ENCODE measurements at regions of chr17 and their contacts with region 1.

Region 1: GRCh38 chr17:45894022-45894784 is at the start of gene MAPT:
- DNase-seq: peak; percentile 91 to 96 (median 93)
- ATAC-seq: peak; percentile 83 to 97 (median 96)
- H3K4me3 ChIP-seq: peak within 1 kb of the TSS; percentile 54 to 95 (median 82)
- H3K27ac ChIP-seq: peak within 1 kb of the TSS in 11 of 12 donors; percentile 55 to 88 (median 68)
- H3K4me1 ChIP-seq: peaks cover 0 to 37% (median 17%) of the 10 kb centered on the region in 12 donors
- H3K27me3 ChIP-seq: peaks cover 0 to 55% (median 21%) of the 10 kb centered on the region in 9 donors
- CTCF ChIP-seq: peak; percentile 77 to 100 (median 98)
- POLR2A ChIP-seq: peak in 1 of 2 donors; percentile 40
- total RNA-seq, gene MAPT: 17.9 to 70.4 (median 38.2) TPM

Region 2: GRCh38 chr17:45355105-45355504 is 539.1 kb before region 1 on chr17:
- intact Hi-C with region 1: no loop called
- DNase-seq: no peak
- ATAC-seq: no peak
- H3K4me3 ChIP-seq: no peak overlapping the region
- H3K27ac ChIP-seq: no peak overlapping the region
- H3K4me1 ChIP-seq: no peaks in the 10 kb centered on the region
- H3K27me3 ChIP-seq: no peaks in the 10 kb centered on the region
- CTCF ChIP-seq: no peak
- POLR2A ChIP-seq: no peak

Region 3: DNA sequence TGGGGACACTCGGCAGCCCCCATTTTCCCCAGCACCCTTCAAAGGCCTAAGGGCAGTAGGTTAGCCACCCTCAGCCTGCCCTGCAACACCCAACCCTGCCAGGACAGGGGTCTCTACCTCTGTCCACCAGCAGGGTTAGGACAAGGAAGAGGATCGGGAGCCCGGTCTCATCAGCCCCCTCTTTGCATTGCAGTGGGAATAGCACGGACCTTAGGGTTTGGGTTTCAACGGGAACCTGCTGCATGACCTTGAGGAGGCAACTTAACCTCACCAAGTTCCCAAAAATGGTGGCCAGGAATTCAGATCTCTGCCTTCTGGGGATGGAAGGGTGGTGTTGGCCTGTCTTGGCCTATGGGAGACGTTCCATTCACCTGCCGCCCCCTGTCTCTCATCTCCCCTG is 69.7 kb before region 1 on chr17:
- intact Hi-C with region 1: no loop called
- DNase-seq: no peak
- ATAC-seq: no peak
- H3K4me3 ChIP-seq: no peak overlapping the region
- H3K27ac ChIP-seq: no peak overlapping the region
- H3K4me1 ChIP-seq: no peaks in the 10 kb centered on the region
- H3K27me3 ChIP-seq: peaks cover 0 to 20% (median 0%) of the 10 kb centered on the region in 9 donors
- CTCF ChIP-seq: no peak
- POLR2A ChIP-seq: no peak

Region 4: GRCh38 chr17:45834471-45835396 is 59.5 kb before region 1 on chr17:
- intact Hi-C with region 1: loop called in 1 of 10 experiments (anchors 10 kb)
- DNase-seq: peak in 1 of 5 donors; percentile 48
- ATAC-seq: no peak
- H3K4me3 ChIP-seq: no peak overlapping the region
- H3K27ac ChIP-seq: no peak overlapping the region
- H3K4me1 ChIP-seq: no peaks in the 10 kb centered on the region
- H3K27me3 ChIP-seq: peaks cover 0 to 34% (median 0%) of the 10 kb centered on the region in 9 donors
- CTCF ChIP-seq: no peak
- POLR2A ChIP-seq: no peak

Region 5: DNA sequence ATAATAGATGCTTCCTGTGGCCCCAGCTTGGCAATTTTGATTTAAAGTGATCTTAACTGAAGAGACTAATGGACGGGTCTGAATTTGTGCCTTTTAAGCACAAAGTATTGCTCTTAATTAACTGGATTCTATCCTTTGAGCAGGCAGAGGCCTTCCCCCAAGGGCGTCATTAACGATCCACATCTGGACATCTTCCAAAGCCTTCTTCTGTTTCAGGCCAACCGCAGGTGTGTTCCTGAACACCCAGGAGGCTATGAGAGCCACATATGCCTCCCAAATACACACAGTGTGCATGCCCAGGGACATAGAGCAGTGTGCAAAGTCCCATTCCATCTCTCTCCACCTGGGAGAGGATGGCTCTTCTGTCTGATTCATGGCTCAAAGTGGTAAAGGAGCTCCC is 42.4 kb after region 1 on chr17:
- intact Hi-C with region 1: loop called in 3 of 10 experiments (anchors 5 to 10 kb)
- DNase-seq: no peak
- ATAC-seq: no peak
- H3K4me3 ChIP-seq: no peak overlapping the region
- H3K27ac ChIP-seq: no peak overlapping the region
- H3K4me1 ChIP-seq: peaks cover 0 to 13% (median 6%) of the 10 kb centered on the region in 12 donors
- H3K27me3 ChIP-seq: no peaks in the 10 kb centered on the region
- CTCF ChIP-seq: no peak
- POLR2A ChIP-seq: no peak

Region 6: DNA sequence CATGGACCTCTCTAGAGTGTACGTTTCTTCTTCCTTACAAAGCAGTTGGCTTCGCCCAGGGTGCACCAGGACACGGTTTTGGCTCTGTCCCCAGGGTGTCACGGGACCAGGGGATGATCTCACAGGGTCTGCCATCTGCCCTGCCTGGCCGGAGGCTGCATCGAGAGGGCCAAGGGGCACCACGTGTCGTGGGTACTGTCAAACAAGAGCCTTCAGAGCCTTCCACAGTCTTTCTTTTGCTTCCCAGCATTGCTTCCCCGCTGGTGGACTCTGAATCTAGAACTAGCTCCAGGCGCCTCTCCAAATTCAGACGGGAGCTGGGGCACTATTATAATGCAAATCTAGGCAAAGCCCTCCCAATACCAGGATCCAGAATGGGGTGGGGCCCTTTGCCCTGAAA is 48.1 kb after region 1 on chr17:
- intact Hi-C with region 1: loop called in 5 of 10 experiments (anchors 2 to 10 kb)
- DNase-seq: peak; percentile 83 to 93 (median 85)
- ATAC-seq: peak; percentile 95 to 99 (median 96)
- H3K4me3 ChIP-seq: no peak overlapping the region
- H3K27ac ChIP-seq: peak overlapping the region in 11 of 12 donors; percentile 32 to 79 (median 69)
- H3K4me1 ChIP-seq: peaks cover 0 to 27% (median 15%) of the 10 kb centered on the region in 12 donors
- H3K27me3 ChIP-seq: no peaks in the 10 kb centered on the region
- CTCF ChIP-seq: no peak
- POLR2A ChIP-seq: no peak

Region 7: DNA sequence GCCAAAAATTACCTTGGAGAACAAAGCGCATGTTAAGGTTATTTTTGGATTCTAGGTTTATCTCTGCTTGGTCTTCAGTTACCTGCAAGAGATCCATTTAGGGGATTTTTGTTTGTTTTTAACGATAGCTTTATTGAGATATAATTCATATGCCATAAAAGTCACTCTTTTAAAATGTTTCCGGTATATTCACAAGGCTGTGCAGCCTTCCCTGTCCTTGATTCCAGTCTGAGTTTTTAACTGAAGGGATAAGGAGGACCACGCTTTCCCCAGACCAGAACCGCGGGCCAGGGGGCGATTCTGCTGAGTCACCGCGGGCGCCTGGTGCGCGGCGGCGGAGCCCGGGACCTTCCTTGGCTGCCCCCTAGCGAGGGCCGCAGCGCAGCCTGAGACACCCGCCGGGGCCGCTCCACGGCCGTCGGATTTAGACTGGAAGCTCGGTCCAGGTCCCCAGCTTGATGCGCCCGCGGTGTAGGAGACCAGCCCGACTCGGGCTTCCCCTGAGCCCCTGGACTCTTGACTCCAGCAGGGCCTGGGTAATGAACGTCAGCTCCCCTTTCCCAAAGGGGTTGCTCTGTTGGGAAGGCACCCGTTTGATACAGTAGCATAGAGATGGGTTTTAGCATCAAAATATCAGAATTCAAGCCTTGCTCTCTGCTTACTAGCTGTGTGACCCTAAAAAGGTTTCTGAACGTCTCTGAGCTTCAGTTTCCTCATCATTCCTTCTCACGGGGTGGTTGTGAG is 54.9 kb after region 1 on chr17:
- intact Hi-C with region 1: loop called in 5 of 10 experiments (anchors 1 to 10 kb)
- DNase-seq: peak; percentile 67 to 87 (median 74)
- ATAC-seq: peak; percentile 64 to 92 (median 88)
- H3K4me3 ChIP-seq: peak overlapping the region in 10 of 12 donors; percentile 12 to 42 (median 30)
- H3K27ac ChIP-seq: peak overlapping the region in 7 of 12 donors; percentile 7 to 52 (median 43)
- H3K4me1 ChIP-seq: peaks cover 0 to 19% (median 7%) of the 10 kb centered on the region in 12 donors
- H3K27me3 ChIP-seq: peaks cover 0 to 14% (median 0%) of the 10 kb centered on the region in 9 donors
- CTCF ChIP-seq: peak; percentile 63 to 87 (median 81)
- POLR2A ChIP-seq: no peak

Measured in heart left ventricle (tissue), 16 donors.